ENCODE measurements at regions of chr17 and their contacts with region 1.

Region 1: DNA sequence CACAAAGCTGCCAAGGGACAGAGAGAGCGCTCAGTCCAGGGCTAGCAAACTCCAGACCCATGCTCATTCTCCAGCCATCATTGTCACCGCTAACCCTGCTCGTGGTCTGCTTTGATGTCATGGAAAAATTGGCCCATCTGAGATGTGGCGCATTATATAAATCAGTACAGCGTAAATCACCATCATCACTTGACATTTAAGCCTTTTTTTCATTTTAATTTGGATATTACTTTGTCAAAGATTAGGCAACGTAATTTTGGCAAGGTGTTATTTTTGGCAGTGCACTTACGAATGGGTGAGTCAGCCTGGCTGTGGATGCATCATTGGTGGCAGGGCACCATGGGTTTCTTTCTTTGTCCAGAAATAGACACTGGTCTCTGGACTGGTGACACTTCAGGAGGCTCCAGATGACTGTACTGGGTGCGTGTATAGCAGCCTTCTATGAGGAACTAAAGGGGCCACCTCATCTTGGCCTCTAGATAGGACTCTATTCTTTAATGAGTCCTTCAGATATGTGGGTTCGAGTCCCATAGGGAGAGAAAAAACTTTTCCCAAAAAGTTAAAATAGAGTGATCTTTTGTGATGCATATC is 166.3 kb downstream of the MSI2 start:
- DNase-seq: no peak
- H3K4me3 ChIP-seq: no peak overlapping the region
- H3K27ac ChIP-seq: no peak overlapping the region
- H3K4me1 ChIP-seq: peaks cover 6 to 17% (median 11%) of the 10 kb centered on the region in 4 experiments; a peak in 6 of 7 replicates
- H3K27me3 ChIP-seq: no peaks in the 10 kb centered on the region
- CTCF ChIP-seq: no peak
- EP300 ChIP-seq: no peak
- POLR2A ChIP-seq: no peak
- RAD21 ChIP-seq: no peak

Region 2: DNA sequence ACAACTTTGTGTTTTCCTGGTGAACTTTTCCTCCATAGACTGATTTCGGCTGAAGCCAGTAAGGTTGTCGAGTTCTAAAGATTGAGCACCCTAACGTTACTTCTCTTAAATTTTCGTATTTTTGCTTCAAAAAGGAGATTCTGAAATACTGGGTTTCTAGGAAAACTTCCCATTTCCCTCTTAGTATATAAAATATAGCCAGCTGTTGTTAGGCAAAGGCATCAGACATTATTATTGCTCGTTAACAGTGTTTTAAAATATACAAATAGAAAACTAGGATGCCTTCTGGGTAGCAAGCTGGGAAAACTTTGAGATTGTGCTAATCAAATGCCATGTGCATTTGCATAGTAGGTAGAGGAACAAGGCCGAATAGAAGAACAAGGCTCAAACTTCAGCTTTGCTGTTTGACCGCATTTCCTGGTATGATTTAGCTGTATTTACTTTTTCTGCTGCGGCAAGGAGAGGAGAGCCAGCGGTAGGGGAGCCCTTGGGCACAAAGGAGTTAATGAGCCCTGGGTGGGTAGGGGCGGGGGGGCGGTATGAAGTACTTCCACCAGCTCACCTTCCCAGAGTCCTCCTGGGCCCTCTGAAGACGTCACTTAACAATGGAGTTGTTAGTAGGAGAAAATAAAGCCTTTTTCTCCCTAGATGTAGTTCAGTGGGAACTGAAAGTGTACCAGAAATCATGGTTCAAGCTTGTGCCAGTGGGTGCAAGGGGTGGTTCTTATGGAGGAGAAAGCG is 14.4 kb before region 1 on chr17:
- CTCF ChIA-PET with region 1: interaction called, 14 read pairs
- POLR2A ChIA-PET with region 1: interaction called, 5 read pairs
- DNase-seq: no peak
- H3K4me3 ChIP-seq: peak overlapping the region in 1 of 4 experiments; percentile 39; a peak in 2 of 8 replicates
- H3K27ac ChIP-seq: peak overlapping the region; percentile 62
- H3K4me1 ChIP-seq: peaks cover 12 to 27% (median 26%) of the 10 kb centered on the region in 4 experiments
- H3K27me3 ChIP-seq: no peaks in the 10 kb centered on the region
- CTCF ChIP-seq: no peak
- EP300 ChIP-seq: no peak
- POLR2A ChIP-seq: no peak
- RAD21 ChIP-seq: 0 out of 4 replicates have a peak, but pooled peaks have one; percentile 10 to 11

Region 3: DNA sequence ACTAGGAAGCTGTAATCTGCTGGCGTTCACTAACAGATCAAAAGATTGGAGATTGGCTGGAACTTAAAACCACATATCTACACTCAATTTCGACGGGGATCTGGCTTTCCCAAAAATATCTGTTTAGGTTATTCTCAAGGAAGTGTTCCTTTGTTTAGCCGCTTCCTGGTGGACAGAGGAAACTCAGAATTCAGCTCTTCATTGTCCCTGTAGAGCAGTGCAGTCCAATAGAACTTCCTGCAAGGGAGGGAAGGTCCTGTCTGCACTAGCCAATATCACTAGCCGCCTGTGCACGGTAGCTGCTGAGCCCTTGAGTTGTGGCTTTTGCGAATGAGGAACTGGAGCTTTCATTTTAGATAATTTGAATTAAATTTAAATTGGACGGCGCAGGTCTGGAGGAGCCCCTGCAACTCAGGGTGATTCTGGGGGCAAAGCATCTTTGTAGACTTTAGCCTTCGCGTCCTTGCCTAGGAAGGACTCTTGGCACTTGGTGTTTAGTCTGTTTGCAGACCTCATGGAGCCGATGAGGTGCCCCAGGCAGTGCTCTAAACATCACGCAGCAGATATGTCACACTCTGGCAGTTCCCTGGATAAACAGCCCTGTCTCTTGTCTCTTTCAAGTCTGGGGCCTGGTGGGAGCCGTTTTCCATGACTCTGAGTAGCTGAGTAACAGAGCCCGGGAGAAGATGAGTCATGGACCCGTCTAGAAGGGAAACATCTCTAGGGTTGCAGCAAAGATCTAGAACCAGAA is 200.2 kb after region 1 on chr17:
- CTCF ChIA-PET with region 1: no interaction called
- POLR2A ChIA-PET with region 1: no interaction called
- DNase-seq: no peak
- H3K4me3 ChIP-seq: no peak overlapping the region
- H3K27ac ChIP-seq: no peak overlapping the region
- H3K4me1 ChIP-seq: no peaks in the 10 kb centered on the region
- H3K27me3 ChIP-seq: no peaks in the 10 kb centered on the region
- CTCF ChIP-seq: no peak
- EP300 ChIP-seq: no peak
- POLR2A ChIP-seq: no peak
- RAD21 ChIP-seq: no peak